GM12878 (cell line): ENCODE measurements at regions of chr3 and their contacts with region 1.

Region 1: DNA sequence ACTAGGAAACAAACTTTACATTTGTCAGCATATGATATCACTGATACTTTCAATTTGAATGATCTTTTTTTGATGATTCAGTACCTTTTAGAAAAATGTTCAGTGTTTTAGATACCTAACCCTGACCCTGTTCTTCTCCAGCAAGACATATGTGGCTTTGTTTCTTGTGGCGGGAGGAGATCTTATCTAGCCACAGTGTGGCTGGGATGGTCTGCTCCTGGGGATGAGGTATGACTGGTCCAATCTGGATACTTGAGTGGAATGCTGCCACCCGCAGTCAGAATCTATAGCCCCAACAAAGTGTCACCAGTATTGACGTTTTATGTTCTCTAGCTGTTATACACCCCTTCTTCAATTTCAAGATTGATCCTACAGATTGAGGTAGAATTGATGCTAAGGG is 439.0 kb upstream of the GOLIM4 start:
- DNase-seq: no peak
- ATAC-seq: peak; percentile 71
- H3K4me3 ChIP-seq: no peak overlapping the region
- H3K27ac ChIP-seq: no peak overlapping the region
- H3K4me1 ChIP-seq: no peaks in the 10 kb centered on the region
- H3K27me3 ChIP-seq: no peaks in the 10 kb centered on the region
- CTCF ChIP-seq: peak in 1 of 3 experiments; percentile 4; a peak in 1 of 6 replicates
- EP300 ChIP-seq: no peak
- POLR2A ChIP-seq: no peak
- RAD21 ChIP-seq: no peak

Region 2: DNA sequence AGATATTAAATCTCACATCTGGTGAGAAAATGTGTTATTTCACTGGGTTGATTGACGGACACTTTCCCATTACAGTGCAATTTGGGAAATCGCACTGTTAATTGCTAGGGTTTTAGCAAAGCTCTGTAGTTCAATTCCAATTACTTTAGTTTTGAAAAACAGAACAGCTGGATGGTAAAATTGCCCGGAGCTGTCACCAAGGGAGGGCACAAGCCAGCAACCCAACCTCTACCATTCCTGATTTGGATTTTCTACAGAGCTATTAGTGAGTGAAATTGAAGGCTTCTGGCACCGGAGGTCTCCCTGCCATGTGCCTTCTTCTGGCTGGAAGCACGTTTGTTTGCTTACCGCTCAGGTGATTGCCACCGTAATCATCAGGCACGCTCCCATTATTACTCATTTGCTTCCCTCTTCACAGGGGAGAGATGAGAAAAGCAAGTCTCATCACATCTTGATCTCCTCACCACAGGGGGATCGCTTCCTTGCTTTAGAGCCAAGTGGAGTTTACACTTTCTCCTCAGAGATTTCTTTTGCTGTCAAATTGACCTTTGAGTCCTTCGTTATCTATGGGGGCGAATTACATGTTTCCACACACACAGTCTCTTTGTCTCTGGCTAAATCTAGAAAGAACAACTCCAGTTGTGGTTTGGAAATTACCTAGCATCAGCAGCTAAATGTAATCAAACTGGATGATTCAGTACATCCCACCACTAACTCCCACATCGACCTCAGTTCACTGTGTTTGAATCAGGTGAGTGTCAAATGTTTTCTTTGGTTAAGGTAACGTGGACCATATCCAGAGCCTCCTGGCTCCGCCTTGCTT is 17.3 kb before region 1 on chr3:
- CTCF ChIA-PET with region 1: interaction called, 10 read pairs
- POLR2A ChIA-PET with region 1: interaction called, 3 read pairs
- RAD21 ChIA-PET with region 1: interaction called, 18 read pairs
- SMC1A ChIA-PET with region 1: interaction called, 14 read pairs
- in situ Hi-C with region 1: no loop called
- intact Hi-C with region 1: no loop called
- DNase-seq: peak; percentile 41
- ATAC-seq: peak; percentile 84
- H3K4me3 ChIP-seq: no peak overlapping the region
- H3K27ac ChIP-seq: 0 out of 2 replicates have a peak overlapping the region, but pooled peaks have one; percentile 2
- H3K4me1 ChIP-seq: no peaks in the 10 kb centered on the region
- H3K27me3 ChIP-seq: no peaks in the 10 kb centered on the region
- CTCF ChIP-seq: no peak
- EP300 ChIP-seq: peak; percentile 48 to 87; a peak in 2 of 4 replicates
- POLR2A ChIP-seq: no peak
- RAD21 ChIP-seq: no peak